K562 (cell line): ENCODE measurements at regions of chr14 and their contacts with region 1.

Region 1: DNA sequence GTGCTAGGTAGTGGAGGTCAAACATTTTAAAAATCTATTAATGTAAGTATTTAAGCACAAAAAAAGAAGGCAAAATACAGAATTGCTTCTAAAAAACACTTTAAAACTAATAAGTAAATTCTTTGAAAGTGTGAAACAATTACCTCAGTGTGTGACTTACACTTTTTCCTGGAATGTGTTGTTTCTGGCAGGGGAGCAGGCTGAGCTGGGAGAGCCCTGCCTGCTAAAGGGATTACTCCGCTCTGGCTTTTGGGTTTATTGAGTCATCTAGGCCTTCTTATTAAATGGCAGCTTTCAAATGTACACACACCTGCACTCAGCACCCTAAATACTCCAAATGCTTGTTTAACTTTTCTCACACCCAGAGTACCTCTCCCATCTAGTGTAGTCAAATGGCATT is 279.8 kb downstream of the AKAP6 start:
- DNase-seq: no peak
- ATAC-seq: no peak
- H3K4me3 ChIP-seq: no peak overlapping the region
- H3K27ac ChIP-seq: no peak overlapping the region
- H3K4me1 ChIP-seq: no peaks in the 10 kb centered on the region
- H3K27me3 ChIP-seq: no peaks in the 10 kb centered on the region
- CTCF ChIP-seq: no peak
- EP300 ChIP-seq: no peak
- POLR2A ChIP-seq: no peak
- RAD21 ChIP-seq: no peak

Region 2: GRCh38 chr14:32702562-32702961 is 93.7 kb after region 1 on chr14:
- CTCF ChIA-PET with region 1: no interaction called
- POLR2A ChIA-PET with region 1: no interaction called
- in situ Hi-C with region 1: no loop called
- intact Hi-C with region 1: no loop called
- DNase-seq: no peak
- ATAC-seq: no peak
- H3K4me3 ChIP-seq: no peak overlapping the region
- H3K27ac ChIP-seq: no peak overlapping the region
- H3K4me1 ChIP-seq: no peaks in the 10 kb centered on the region
- H3K27me3 ChIP-seq: no peaks in the 10 kb centered on the region
- CTCF ChIP-seq: no peak
- EP300 ChIP-seq: no peak
- POLR2A ChIP-seq: no peak
- RAD21 ChIP-seq: no peak

Region 3: GRCh38 chr14:32896979-32897697 is 288.3 kb after region 1 on chr14:
- CTCF ChIA-PET with region 1: no interaction called
- POLR2A ChIA-PET with region 1: no interaction called
- in situ Hi-C with region 1: loop called (anchors 10 kb)
- intact Hi-C with region 1: no loop called
- DNase-seq: no peak
- ATAC-seq: no peak
- H3K4me3 ChIP-seq: peak overlapping the region; percentile 18
- H3K27ac ChIP-seq: no peak overlapping the region
- H3K4me1 ChIP-seq: no peaks in the 10 kb centered on the region
- H3K27me3 ChIP-seq: 0 out of 5 replicates have a peak, but pooled peaks cover 0 to 4% of the 10 kb centered on the region in 2 experiments
- CTCF ChIP-seq: no peak
- EP300 ChIP-seq: no peak
- POLR2A ChIP-seq: no peak
- RAD21 ChIP-seq: no peak